Naive thymus-derived CD4-positive, alpha-beta T cell (primary cell): ENCODE measurements at regions of chr14 and their contacts with region 1.

Region 1: DNA sequence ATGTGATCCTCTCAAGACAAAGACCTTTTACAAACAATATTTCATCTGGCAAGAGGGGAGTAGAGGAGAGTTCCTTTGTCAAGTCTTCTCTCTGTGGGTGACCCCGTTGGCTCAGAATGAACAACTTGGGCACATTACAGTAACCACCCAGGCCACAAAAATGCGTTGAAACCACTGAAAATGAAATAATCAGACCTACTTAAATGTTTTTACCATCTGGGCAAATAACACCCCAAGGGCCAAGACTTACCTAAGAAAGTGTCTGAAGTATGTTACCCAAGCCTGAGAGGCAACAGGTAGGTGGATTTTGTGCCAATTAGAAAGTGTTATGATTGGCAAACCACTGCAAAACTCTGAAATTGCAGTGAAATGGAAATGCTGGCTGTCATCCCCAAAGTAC is 1.3 kb downstream of the TC2N start:
- DNase-seq: peak in 6 of 9 donors; percentile 29 to 51 (median 34)
- ATAC-seq: no peak
- H3K4me3 ChIP-seq: peak overlapping the region; percentile 88
- H3K4me3 Mint-ChIP-seq: peak overlapping the region; percentile 83 to 99 (median 96)
- H3K27ac ChIP-seq: peak overlapping the region; percentile 91
- H3K27ac Mint-ChIP-seq: peak overlapping the region; percentile 96 to 100 (median 99)
- H3K4me1 ChIP-seq: peaks cover 64 to 67% of the 10 kb centered on the region in 2 donors
- H3K4me1 Mint-ChIP-seq: peaks cover 55 to 84% (median 70%) of the 10 kb centered on the region in 7 donors
- H3K27me3 ChIP-seq: no peaks in the 10 kb centered on the region
- H3K27me3 Mint-ChIP-seq: no peaks in the 10 kb centered on the region

Region 2: DNA sequence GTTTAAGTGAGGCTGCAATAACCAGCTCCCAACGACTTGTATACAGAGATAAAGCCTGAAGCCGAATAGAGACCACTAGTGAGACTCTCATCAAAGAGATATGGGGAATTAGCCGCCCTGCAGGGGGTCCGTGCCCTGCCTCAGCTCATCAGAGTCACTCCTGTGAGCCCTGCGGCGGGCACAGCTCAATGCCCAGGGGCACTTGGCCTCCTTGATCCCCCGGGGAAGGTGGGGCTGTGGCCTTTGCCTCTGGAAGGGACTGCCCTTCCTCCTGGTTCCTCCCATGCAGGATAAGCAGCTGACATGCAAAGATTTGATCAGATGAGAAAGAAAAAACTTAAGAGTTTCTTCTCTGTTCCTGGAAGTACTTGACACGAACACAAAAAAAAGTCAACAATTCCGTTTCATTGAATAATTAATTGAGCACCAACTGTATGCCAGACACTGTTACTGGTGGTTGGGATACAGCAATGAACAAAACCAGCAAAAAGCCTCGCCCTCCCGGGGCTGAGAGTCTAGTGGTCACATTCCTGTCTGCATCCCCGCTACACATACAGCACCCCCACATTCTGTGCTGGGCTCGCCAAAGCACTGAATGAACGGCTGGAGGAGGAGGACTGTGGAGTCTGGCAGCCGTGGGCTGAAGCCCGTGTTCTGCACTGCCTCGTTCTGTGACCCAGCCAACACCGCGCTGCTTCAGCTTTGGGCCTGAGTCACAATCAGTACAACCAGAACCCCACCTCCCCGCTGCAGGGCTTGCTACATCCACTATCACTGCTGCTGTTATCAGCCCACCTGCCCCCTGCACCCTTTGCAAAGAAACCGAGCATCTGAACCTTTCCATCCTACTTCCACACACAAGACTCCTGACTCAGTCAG is 1060.2 kb before region 1 on chr14:
- CTCF ChIA-PET with region 1: no interaction called
- POLR2A ChIA-PET with region 1: no interaction called
- intact Hi-C with region 1: no loop called
- DNase-seq: no peak
- ATAC-seq: no peak
- H3K4me3 ChIP-seq: no peak overlapping the region
- H3K4me3 Mint-ChIP-seq: no peak overlapping the region
- H3K27ac ChIP-seq: no peak overlapping the region
- H3K27ac Mint-ChIP-seq: no peak overlapping the region
- H3K4me1 ChIP-seq: no peaks in the 10 kb centered on the region
- H3K4me1 Mint-ChIP-seq: peaks cover 6 to 16% (median 8%) of the 10 kb centered on the region in 7 donors
- H3K27me3 ChIP-seq: no peaks in the 10 kb centered on the region
- H3K27me3 Mint-ChIP-seq: no peaks in the 10 kb centered on the region

Region 3: DNA sequence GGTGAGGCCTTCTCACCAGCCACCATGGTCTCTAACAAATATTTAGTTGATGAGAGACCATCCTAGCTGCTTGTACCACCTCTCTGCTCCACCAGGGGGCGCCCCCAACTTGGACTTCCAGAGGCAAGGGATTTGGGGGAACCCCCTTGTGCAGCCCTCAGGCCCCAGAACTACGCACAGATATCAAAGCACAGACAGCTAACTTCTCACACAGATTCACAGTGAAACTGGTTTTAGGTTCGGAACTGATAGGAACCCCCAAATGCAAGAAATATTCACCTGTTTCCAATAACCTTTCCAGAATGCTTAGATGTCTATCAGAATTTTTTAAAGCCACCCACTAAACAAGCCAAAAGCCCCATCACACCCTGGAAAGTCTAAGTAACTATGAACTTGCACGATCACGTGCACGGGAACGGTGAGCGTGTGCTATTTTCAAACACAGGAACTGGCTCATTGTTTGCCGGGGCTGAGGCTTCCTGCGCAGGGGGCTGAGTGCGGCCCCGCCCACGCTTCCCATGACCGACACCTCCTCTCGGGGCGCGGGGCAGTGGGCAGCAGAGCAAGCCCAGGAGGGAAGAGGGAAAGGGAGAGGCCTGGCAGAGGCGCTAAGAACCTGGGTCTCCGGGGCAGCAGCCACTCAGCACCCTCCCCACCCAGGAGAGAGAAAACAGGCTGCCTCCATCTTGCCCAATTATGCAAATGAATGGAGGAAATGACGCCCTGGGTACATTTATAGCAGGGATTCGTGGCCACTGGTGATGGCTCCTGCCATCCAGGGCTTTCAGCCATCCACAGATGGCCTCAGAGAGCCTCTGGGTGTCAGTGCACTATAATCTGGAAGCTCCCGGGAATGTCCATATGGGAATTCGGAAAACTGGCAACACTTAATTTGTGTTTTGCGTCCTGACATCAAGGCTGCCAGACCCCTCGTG is 542.1 kb before region 1 on chr14:
- CTCF ChIA-PET with region 1: no interaction called
- POLR2A ChIA-PET with region 1: no interaction called
- intact Hi-C with region 1: loop called (anchors 10 kb)
- DNase-seq: peak; percentile 90 to 95 (median 92)
- ATAC-seq: peak; percentile 94
- H3K4me3 ChIP-seq: peak overlapping the region; percentile 39
- H3K4me3 Mint-ChIP-seq: peak overlapping the region; percentile 77 to 98 (median 84)
- H3K27ac ChIP-seq: peak overlapping the region; percentile 81
- H3K27ac Mint-ChIP-seq: peak overlapping the region; percentile 94 to 100 (median 99)
- H3K4me1 ChIP-seq: peaks cover 48 to 60% of the 10 kb centered on the region in 2 donors
- H3K4me1 Mint-ChIP-seq: peaks cover 52 to 91% (median 82%) of the 10 kb centered on the region in 7 donors
- H3K27me3 ChIP-seq: no peaks in the 10 kb centered on the region
- H3K27me3 Mint-ChIP-seq: no peaks in the 10 kb centered on the region

Region 4: DNA sequence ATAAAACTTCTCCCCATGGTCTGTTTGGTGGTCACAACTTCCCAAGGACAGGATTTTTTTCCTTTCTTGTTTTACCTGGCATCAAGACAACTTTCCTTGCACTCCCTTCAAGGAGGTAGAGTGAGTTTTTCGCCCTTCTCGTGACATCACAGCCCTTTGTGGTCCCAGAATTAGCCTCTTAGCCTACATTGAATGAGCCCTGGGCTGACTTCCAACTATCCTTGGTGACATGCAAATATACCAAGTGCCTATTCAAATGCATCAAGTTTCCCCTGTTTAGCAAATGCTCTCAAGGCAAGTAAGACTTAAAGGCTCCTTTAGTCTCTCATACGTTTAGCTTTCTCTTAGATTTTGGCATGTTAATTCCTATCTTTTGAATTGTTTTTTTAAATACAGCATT is 35.3 kb before region 1 on chr14:
- CTCF ChIA-PET with region 1: interaction called, 6 read pairs
- POLR2A ChIA-PET with region 1: interaction called, 194 read pairs
- intact Hi-C with region 1: no loop called
- DNase-seq: no peak
- ATAC-seq: no peak
- H3K4me3 ChIP-seq: no peak overlapping the region
- H3K4me3 Mint-ChIP-seq: peak overlapping the region in 7 of 10 donors; percentile 20 to 60 (median 42)
- H3K27ac ChIP-seq: no peak overlapping the region
- H3K27ac Mint-ChIP-seq: peak overlapping the region in 7 of 9 donors; percentile 0 to 75 (median 49)
- H3K4me1 ChIP-seq: peaks cover 22 to 33% of the 10 kb centered on the region in 2 donors
- H3K4me1 Mint-ChIP-seq: peaks cover 45 to 96% (median 81%) of the 10 kb centered on the region in 7 donors
- H3K27me3 ChIP-seq: no peaks in the 10 kb centered on the region
- H3K27me3 Mint-ChIP-seq: peaks cover 0 to 3% (median 0%) of the 10 kb centered on the region in 5 donors

Region 5: DNA sequence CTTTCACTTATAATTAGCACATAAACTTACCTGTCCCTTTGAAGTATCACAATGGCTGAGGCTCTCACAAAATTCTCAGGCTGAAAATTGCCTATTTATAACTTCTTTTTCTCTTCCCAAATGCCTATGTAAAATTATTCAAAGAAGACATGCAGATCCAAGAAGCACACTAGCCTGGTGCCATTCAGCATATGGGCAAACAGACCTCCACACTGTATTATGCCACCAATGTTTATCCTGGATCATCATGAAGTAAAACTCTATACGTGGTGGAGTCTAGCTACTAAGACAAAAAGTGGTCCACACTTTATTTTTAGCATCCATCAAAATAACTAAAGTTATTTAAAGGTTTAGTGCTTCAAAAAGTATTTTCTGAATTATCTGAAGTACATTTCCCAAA is 14.5 kb before region 1 on chr14:
- CTCF ChIA-PET with region 1: interaction called, 5 read pairs
- POLR2A ChIA-PET with region 1: interaction called, 245 read pairs
- intact Hi-C with region 1: loop called in 1 of 2 experiments (anchors 1 kb)
- DNase-seq: no peak
- ATAC-seq: no peak
- H3K4me3 ChIP-seq: no peak overlapping the region
- H3K4me3 Mint-ChIP-seq: no peak overlapping the region
- H3K27ac ChIP-seq: no peak overlapping the region
- H3K27ac Mint-ChIP-seq: peak overlapping the region in 6 of 9 donors; percentile 27 to 75 (median 58)
- H3K4me1 ChIP-seq: peaks cover 23 to 30% of the 10 kb centered on the region in 2 donors
- H3K4me1 Mint-ChIP-seq: peaks cover 34 to 88% (median 82%) of the 10 kb centered on the region in 7 donors
- H3K27me3 ChIP-seq: no peaks in the 10 kb centered on the region
- H3K27me3 Mint-ChIP-seq: no peaks in the 10 kb centered on the region

Region 6: GRCh38 chr14:91893007-91893406 is 26.9 kb after region 1 on chr14:
- CTCF ChIA-PET with region 1: interaction called, 5 read pairs
- POLR2A ChIA-PET with region 1: interaction called, 131 read pairs
- intact Hi-C with region 1: no loop called
- DNase-seq: peak in 3 of 9 donors; percentile 19 to 38 (median 30)
- ATAC-seq: peak; percentile 48
- H3K4me3 ChIP-seq: no peak overlapping the region
- H3K4me3 Mint-ChIP-seq: peak overlapping the region in 3 of 10 donors; percentile 31 to 55 (median 38)
- H3K27ac ChIP-seq: no peak overlapping the region
- H3K27ac Mint-ChIP-seq: peak overlapping the region; percentile 6 to 90 (median 72)
- H3K4me1 ChIP-seq: peaks cover 35 to 37% of the 10 kb centered on the region in 2 donors
- H3K4me1 Mint-ChIP-seq: peaks cover 30 to 80% (median 68%) of the 10 kb centered on the region in 7 donors
- H3K27me3 ChIP-seq: no peaks in the 10 kb centered on the region
- H3K27me3 Mint-ChIP-seq: no peaks in the 10 kb centered on the region

Region 7: DNA sequence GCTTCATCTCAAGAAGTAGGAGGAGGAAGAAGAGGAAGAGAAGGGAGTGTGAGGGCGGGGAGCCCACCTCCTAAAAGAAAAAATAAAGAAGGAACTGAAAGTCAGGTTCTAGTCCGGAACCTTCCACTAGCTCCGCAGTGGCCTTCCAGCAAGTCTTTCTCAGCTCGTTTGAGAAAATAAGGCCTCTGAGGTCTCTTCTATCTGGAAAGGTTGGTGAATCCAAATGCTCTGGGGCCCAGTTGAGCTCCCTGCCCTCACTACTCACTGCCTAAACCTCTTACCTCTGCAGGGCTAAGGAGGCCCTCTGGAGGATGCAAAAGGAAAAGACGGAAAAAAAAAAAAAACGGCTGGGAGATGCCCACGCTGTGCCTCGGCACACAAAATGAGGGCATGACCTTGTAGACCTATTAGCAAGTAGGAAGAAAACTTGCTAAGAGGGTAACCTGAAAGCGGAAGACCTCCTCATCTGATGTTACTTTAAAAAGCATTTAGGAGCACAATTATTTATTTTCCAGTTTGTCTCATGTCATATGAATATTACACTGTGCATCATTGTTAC is 45.5 kb after region 1 on chr14:
- CTCF ChIA-PET with region 1: interaction called, 7 read pairs
- POLR2A ChIA-PET with region 1: interaction called, 15 read pairs
- intact Hi-C with region 1: loop called in 1 of 2 experiments (anchors 1 kb)
- DNase-seq: peak in 7 of 9 donors; percentile 39 to 76 (median 64)
- ATAC-seq: peak; percentile 95
- H3K4me3 ChIP-seq: no peak overlapping the region
- H3K4me3 Mint-ChIP-seq: peak overlapping the region in 8 of 10 donors; percentile 3 to 65 (median 32)
- H3K27ac ChIP-seq: no peak overlapping the region
- H3K27ac Mint-ChIP-seq: peak overlapping the region in 7 of 9 donors; percentile 66 to 89 (median 83)
- H3K4me1 ChIP-seq: peaks cover 0 to 9% of the 10 kb centered on the region in 2 donors
- H3K4me1 Mint-ChIP-seq: peaks cover 11 to 27% (median 23%) of the 10 kb centered on the region in 7 donors
- H3K27me3 ChIP-seq: no peaks in the 10 kb centered on the region
- H3K27me3 Mint-ChIP-seq: peaks cover 0 to 2% (median 0%) of the 10 kb centered on the region in 5 donors